Dendritic cell treated with granulocyte-macrophage colony-stimulating factor and Interleukin-4, amounts not matched to agents 40 ng/mL and 50 ng/mL, for 4 days (primary cell): ENCODE measurements at regions of chr1 and their contacts with region 1.

Region 1: GRCh38 chr1:207963427-207964194 is 52.7 kb upstream of the CD34 start:
- H3K4me3 Mint-ChIP-seq: peak overlapping the region; percentile 77
- H3K27ac Mint-ChIP-seq: peak overlapping the region; percentile 93
- H3K4me1 Mint-ChIP-seq: peaks cover 35% of the 10 kb centered on the region
- H3K27me3 Mint-ChIP-seq: peaks cover 38% of the 10 kb centered on the region

Region 2: DNA sequence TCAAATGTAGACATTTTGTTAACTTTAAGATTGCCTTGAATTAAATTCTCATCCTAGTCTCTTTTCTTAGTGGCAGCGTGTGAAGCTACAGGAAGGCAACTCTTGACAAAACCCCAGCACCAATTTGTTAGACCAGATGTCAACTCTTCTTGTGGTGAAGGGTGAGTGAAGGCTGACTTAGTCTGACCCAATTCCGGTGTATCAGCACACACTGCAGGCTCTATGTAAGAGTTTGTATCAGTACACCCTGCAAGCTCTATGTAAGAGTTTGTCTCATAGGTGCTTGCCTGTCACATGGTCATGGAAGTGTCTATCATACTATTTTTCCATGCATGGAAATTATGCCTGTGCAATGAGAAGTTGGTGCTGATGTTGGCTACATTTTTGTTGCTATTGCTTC is 492.7 kb before region 1 on chr1:
- intact Hi-C with region 1: no loop called
- H3K4me3 Mint-ChIP-seq: no peak overlapping the region
- H3K27ac Mint-ChIP-seq: no peak overlapping the region
- H3K4me1 Mint-ChIP-seq: no peaks in the 10 kb centered on the region
- H3K27me3 Mint-ChIP-seq: peaks cover 6% of the 10 kb centered on the region

Region 3: DNA sequence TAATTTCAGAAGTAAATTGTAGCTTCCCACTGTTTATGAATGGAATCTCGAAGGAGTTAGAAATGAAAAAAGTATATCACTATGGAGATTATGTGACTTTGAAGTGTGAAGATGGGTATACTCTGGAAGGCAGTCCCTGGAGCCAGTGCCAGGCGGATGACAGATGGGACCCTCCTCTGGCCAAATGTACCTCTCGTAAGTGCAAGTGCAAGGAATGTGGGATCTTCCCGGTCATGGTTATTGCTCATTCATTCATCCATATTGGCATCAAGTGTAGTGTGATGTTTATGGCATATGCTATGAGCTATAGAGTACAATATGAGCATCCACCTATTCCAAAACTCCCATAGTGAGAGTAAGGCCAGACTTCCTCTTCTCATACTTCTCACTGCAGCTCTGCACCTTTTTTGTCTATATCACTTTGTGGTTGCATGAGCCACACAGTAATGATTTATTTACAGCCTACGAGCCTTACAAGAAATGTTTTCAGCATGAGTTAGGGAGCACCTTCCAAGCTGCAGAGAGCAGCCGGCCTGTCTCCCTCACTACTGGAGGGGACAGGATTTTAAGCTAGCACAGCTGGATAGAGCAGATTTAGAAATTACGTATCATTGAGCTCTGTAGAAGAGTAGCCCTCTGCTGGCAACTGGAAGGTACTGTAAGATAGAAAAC is 343.6 kb before region 1 on chr1:
- intact Hi-C with region 1: no loop called
- H3K4me3 Mint-ChIP-seq: no peak overlapping the region
- H3K27ac Mint-ChIP-seq: no peak overlapping the region
- H3K4me1 Mint-ChIP-seq: no peaks in the 10 kb centered on the region
- H3K27me3 Mint-ChIP-seq: no peaks in the 10 kb centered on the region

Region 4: GRCh38 chr1:207885129-207886032 is 78.2 kb before region 1 on chr1:
- intact Hi-C with region 1: loop called (anchors 1 kb)
- H3K4me3 Mint-ChIP-seq: no peak overlapping the region
- H3K27ac Mint-ChIP-seq: peak overlapping the region; percentile 30
- H3K4me1 Mint-ChIP-seq: peaks cover 64% of the 10 kb centered on the region
- H3K27me3 Mint-ChIP-seq: peaks cover 10% of the 10 kb centered on the region

Region 5: GRCh38 chr1:207897188-207897587 is 66.4 kb before region 1 on chr1:
- intact Hi-C with region 1: loop called (anchors 2 kb)
- H3K4me3 Mint-ChIP-seq: no peak overlapping the region
- H3K27ac Mint-ChIP-seq: no peak overlapping the region
- H3K4me1 Mint-ChIP-seq: peaks cover 16% of the 10 kb centered on the region
- H3K27me3 Mint-ChIP-seq: no peaks in the 10 kb centered on the region

Region 6: GRCh38 chr1:207919523-207920170 is 44.0 kb before region 1 on chr1:
- intact Hi-C with region 1: loop called (anchors 5 kb)
- H3K4me3 Mint-ChIP-seq: no peak overlapping the region
- H3K27ac Mint-ChIP-seq: no peak overlapping the region
- H3K4me1 Mint-ChIP-seq: peaks cover 46% of the 10 kb centered on the region
- H3K27me3 Mint-ChIP-seq: peaks cover 19% of the 10 kb centered on the region